Posterior vena cava (tissue), 2 donors: ENCODE measurements at regions of chr19 and their contacts with region 1.

Region 1: GRCh38 chr19:24099829-24100228 is 12.8 kb downstream of the ZNF254 start:
- DNase-seq: no peak

Region 2: GRCh38 chr19:23294141-23294540 is 805.7 kb before region 1 on chr19:
- intact Hi-C with region 1: loop called in 1 of 2 experiments (anchors 5 kb)
- DNase-seq: no peak

Region 3: GRCh38 chr19:24040621-24041020 is 59.2 kb before region 1 on chr19:
- intact Hi-C with region 1: no loop called
- DNase-seq: no peak